K562 (cell line): ENCODE measurements at regions of chr22 and their contacts with region 1.

Region 1: DNA sequence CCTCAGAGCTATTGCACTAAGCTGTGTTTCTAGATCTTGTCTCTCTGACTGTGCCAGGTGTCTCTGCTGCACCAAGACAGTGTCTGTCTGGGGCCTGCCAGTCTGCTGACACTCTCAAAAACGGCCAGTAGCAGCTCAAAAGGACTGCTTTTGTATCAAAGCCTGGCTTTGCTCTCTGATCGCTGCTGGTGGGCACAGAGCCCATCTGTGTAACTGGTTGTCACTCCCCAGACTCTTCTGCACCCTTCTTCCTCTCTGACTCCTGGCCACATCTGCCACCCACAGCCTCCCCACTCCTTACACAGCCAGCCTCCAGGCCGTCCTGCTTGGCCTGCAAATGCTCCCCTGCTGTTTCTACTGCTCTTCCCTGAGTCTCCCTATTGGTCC is 26.5 kb downstream of the MED15 start:
- DNase-seq: no peak
- ATAC-seq: no peak
- H3K4me3 ChIP-seq: no peak overlapping the region
- H3K27ac ChIP-seq: no peak overlapping the region
- H3K4me1 ChIP-seq: peaks cover 0 to 44% of the 10 kb centered on the region in 2 experiments; a peak in 2 of 5 replicates
- H3K27me3 ChIP-seq: no peaks in the 10 kb centered on the region
- CTCF ChIP-seq: no peak
- EP300 ChIP-seq: no peak
- POLR2A ChIP-seq: no peak
- RAD21 ChIP-seq: no peak

Region 2: GRCh38 chr22:20550821-20551744 is 17.2 kb after region 1 on chr22:
- CTCF ChIA-PET with region 1: no interaction called
- POLR2A ChIA-PET with region 1: interaction called, 1,693 read pairs
- in situ Hi-C with region 1: no loop called
- intact Hi-C with region 1: loop called (anchors 2 kb)
- DNase-seq: no peak
- ATAC-seq: no peak
- H3K4me3 ChIP-seq: no peak overlapping the region
- H3K27ac ChIP-seq: no peak overlapping the region
- H3K4me1 ChIP-seq: peaks cover 22 to 33% of the 10 kb centered on the region in 2 experiments
- H3K27me3 ChIP-seq: no peaks in the 10 kb centered on the region
- CTCF ChIP-seq: no peak
- EP300 ChIP-seq: no peak
- POLR2A ChIP-seq: no peak
- RAD21 ChIP-seq: no peak

Region 3: DNA sequence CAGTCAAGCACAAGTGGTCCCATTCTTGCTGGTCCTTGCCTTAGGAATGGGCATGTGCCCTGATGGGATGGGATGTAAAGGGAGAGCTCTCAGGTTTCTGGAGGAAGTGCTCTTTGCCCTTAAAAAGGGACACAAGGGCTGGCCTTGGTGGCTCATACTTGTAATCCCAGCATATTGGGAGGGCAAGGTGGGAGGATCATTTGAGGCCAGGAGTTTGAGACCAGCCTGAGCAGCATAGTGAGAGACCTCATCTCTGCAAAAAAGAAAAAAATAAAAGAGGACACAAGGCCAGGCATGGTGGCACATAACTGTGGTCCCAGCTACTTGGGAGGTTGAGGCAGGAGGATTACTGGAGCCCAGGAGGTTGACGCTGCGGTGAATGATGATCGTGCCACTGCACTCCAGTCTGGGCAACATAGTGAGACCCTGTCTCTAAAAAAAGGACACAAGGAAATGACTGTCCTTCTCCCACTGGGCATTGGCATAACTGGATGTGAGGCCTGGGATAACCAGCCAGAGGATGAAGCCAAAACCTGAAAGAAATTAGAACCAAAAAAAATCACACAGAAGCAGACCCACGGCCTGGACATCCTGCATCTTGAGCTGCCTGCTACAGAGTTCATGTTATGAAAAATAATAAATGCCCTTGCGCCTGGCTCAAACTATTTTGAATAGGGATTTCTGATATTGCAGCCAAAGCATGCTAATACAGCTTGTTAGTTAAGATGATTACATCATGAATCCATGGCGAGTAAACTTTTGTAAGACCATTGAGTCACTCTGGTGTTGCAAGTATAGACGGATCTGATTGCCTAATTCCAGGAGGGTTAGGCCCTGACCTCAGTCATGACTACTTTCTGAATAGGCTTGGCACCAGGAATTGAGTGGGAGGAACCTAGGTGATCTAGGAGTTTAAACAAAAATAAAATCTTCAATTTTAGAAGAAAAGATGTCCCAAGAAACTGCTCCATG is 370.4 kb after region 1 on chr22:
- CTCF ChIA-PET with region 1: no interaction called
- POLR2A ChIA-PET with region 1: no interaction called
- in situ Hi-C with region 1: no loop called
- intact Hi-C with region 1: no loop called
- DNase-seq: peak; percentile 48 to 63 (median 54)
- ATAC-seq: peak; percentile 9; the same call in 2 of the 3 replicates
- H3K4me3 ChIP-seq: no peak overlapping the region
- H3K27ac ChIP-seq: no peak overlapping the region
- H3K4me1 ChIP-seq: no peaks in the 10 kb centered on the region
- H3K27me3 ChIP-seq: peaks cover 15 to 27% of the 10 kb centered on the region in 2 experiments
- CTCF ChIP-seq: no peak
- EP300 ChIP-seq: peak; percentile 51; the same call in 1 of the 2 replicates
- POLR2A ChIP-seq: no peak
- RAD21 ChIP-seq: no peak